ENCODE measurements at regions of chr4 and their contacts with region 1.

Region 1: GRCh38 chr4:90281541-90282355 is 154.6 kb downstream of the CCSER1 start:
- DNase-seq: no peak
- H3K4me3 ChIP-seq: no peak overlapping the region
- H3K27ac ChIP-seq: peak overlapping the region in 1 of 59 donors; percentile 30
- H3K27me3 ChIP-seq: no peaks in the 10 kb centered on the region
- CTCF ChIP-seq: no peak

Region 2: GRCh38 chr4:90007494-90008167 is 274.1 kb before region 1 on chr4:
- intact Hi-C with region 1: no loop called
- DNase-seq: no peak
- H3K4me3 ChIP-seq: no peak overlapping the region
- H3K27ac ChIP-seq: no peak overlapping the region
- H3K27me3 ChIP-seq: no peaks in the 10 kb centered on the region
- CTCF ChIP-seq: no peak

Region 3: DNA sequence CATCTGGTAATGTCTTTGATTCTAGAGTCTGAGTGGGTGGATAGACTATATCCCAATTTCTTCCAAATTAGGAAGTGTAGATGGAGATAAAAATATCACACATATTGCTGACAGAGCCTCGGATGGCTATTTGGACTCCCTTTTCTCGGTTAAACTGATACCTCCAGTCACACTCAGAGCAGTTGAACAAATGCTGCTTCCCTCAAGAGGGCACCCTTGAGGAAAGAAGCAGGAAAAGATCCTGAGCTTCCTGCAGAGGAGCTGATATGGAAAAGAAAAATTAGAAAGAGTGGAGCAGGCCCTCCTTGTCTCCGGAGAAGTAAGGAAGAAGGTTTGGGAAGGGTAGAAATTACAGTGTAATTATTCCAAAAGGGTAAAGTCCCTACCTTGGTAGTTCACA is 250.8 kb before region 1 on chr4:
- intact Hi-C with region 1: loop called in 1 of 2 experiments (anchors 10 kb)
- DNase-seq: no peak
- H3K4me3 ChIP-seq: no peak overlapping the region
- H3K27ac ChIP-seq: peak overlapping the region in 1 of 59 donors; percentile 13
- H3K27me3 ChIP-seq: no peaks in the 10 kb centered on the region
- CTCF ChIP-seq: peak in 18 of 56 donors; percentile 9 to 35 (median 19)

Measured in dorsolateral prefrontal cortex (tissue), 120 donors.